Sigmoid colon (tissue), 7 donors: ENCODE measurements at regions of chr19 and their contacts with region 1.

Region 1: GRCh38 chr19:48674921-48675824 is 2.4 kb upstream of the NTN5 start:
- DNase-seq: peak; percentile 92
- H3K4me3 ChIP-seq: no peak overlapping the region
- H3K27ac ChIP-seq: peak overlapping the region in 1 of 4 donors; percentile 20
- H3K4me1 ChIP-seq: peaks cover 0 to 12% (median 9%) of the 10 kb centered on the region in 4 donors
- H3K27me3 ChIP-seq: no peaks in the 10 kb centered on the region
- CTCF ChIP-seq: peak; percentile 81 to 91 (median 86)
- EP300 ChIP-seq: no peak
- POLR2A ChIP-seq: no peak

Region 2: DNA sequence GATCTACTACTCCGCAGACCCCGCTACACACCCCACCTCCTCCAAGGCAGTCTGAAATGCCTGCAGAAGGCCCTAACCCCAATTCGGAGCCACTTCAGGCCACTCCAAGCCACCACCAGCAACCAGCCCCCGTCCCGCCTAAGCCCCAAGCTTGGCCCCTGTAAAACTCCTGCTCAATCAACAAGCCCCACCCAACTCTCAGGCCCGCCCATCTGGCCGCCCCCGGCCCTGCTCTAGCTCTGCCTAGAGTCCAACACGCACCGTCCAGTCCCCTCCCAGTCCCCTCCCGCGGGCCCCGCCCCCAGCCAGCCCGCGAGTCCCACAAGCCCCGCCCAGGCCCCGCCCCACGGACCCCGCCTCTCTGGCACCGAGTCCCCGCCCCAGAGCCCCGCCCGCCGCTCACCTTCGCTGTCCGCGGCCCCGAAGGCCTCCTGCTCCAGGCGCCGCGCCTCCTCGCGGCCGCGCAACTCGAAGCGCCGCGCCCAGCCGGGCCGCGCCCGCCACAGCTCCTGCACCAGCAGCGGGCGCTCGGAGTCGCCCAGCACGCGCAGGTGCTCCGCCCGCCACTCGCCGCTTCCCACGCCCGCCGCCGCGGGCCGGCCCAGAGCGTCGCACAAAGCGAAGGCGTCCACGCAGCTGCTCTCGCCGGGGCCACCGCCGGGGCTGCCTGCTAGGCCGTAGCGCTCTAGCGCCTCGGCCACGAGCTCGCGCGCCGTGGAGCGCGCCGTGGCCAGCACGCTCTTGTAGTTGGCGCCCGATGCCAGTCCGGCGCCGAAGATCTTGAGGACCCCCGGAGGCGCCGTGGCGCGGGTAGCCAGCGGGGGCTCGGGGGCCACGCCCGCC is 63.6 kb after region 1 on chr19:
- intact Hi-C with region 1: loop called (anchors 2 kb)
- DNase-seq: peak; percentile 96
- H3K4me3 ChIP-seq: peak overlapping the region; percentile 33 to 63 (median 48)
- H3K27ac ChIP-seq: peak overlapping the region; percentile 41 to 77 (median 64)
- H3K4me1 ChIP-seq: peaks cover 0 to 15% (median 8%) of the 10 kb centered on the region in 4 donors
- H3K27me3 ChIP-seq: peaks cover 0 to 19% (median 0%) of the 10 kb centered on the region in 3 donors
- CTCF ChIP-seq: peak in 1 of 4 experiments; percentile 40
- EP300 ChIP-seq: no peak
- POLR2A ChIP-seq: no peak